Mammary epithelial cell (primary cell): ENCODE measurements at regions of chr3 and their contacts with region 1.

Region 1: GRCh38 chr3:142916615-142917014 is 27.7 kb upstream of the PCOLCE2 start:
- DNase-seq: peak; percentile 28
- H3K4me3 ChIP-seq: no peak overlapping the region
- H3K27ac ChIP-seq: no peak overlapping the region
- H3K4me1 ChIP-seq: no peaks in the 10 kb centered on the region
- H3K27me3 ChIP-seq: no peaks in the 10 kb centered on the region
- CTCF ChIP-seq: no peak

Region 2: GRCh38 chr3:142716102-142716501 is 200.5 kb before region 1 on chr3:
- CTCF ChIA-PET with region 1: no interaction called
- dilution Hi-C with region 1: no loop called
- in situ Hi-C with region 1: no loop called
- intact Hi-C with region 1: no loop called
- DNase-seq: no peak
- H3K4me3 ChIP-seq: no peak overlapping the region
- H3K27ac ChIP-seq: no peak overlapping the region
- H3K4me1 ChIP-seq: no peaks in the 10 kb centered on the region
- H3K27me3 ChIP-seq: no peaks in the 10 kb centered on the region
- CTCF ChIP-seq: no peak

Region 3: DNA sequence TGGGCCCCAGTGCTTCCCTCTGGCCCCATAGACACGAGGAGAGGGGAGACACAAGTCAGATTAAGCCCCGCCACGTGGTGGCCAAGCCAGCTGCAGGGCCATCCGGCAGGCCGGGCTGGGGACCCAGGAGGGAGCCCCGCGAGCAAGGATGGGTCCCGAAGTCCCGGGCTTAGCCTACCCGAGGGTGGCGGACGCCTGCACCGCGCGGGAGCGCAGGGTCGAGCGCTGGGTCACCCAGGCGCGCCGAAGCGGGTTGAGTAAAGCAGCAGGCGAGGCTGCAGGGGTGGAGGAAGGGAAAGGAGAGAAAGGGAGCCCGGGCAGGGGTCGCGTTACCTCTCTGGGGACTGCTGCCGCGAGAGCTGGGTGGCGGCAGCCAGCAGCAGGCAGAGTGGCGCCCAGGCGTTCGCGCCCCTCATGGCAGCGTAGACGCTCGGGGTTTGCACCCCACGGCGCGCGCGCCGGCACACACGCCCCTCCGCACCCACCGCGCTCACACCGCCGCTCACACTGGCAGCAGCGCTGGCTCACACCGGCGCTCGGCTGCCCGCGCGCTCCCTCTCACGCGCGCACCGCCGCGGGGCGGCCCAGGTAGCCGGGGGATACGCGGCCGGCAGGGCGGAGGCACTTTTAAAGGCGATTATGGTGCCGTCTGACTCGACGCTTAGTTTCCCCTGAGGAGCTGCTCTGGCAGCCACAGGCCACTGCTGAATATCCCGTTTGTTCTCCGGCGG is 28.0 kb before region 1 on chr3 and contains the start of gene PCOLCE2:
- CTCF ChIA-PET with region 1: no interaction called
- dilution Hi-C with region 1: loop called (anchors 5 kb)
- in situ Hi-C with region 1: no loop called
- intact Hi-C with region 1: no loop called
- DNase-seq: peak; percentile 47
- H3K4me3 ChIP-seq: peak within 1 kb of the TSS; percentile 60 to 61 (median 60)
- H3K27ac ChIP-seq: no peak within 1 kb of the TSS
- H3K4me1 ChIP-seq: peaks cover 13% of the 10 kb centered on the region
- H3K27me3 ChIP-seq: no peaks in the 10 kb centered on the region
- CTCF ChIP-seq: no peak
- total RNA-seq, gene PCOLCE2: 2.8 to 3.5 TPM

Region 4: GRCh38 chr3:142976621-142977398 is 60.2 kb after region 1 on chr3:
- CTCF ChIA-PET with region 1: no interaction called
- dilution Hi-C with region 1: loop called (anchors 5 kb)
- in situ Hi-C with region 1: no loop called
- intact Hi-C with region 1: no loop called
- DNase-seq: peak; percentile 89
- H3K4me3 ChIP-seq: no peak overlapping the region
- H3K27ac ChIP-seq: peak overlapping the region; percentile 1
- H3K4me1 ChIP-seq: peaks cover 14% of the 10 kb centered on the region
- H3K27me3 ChIP-seq: no peaks in the 10 kb centered on the region
- CTCF ChIP-seq: no peak

Region 5: GRCh38 chr3:143037867-143038266 is 121.3 kb after region 1 on chr3:
- CTCF ChIA-PET with region 1: no interaction called
- dilution Hi-C with region 1: no loop called
- in situ Hi-C with region 1: no loop called
- intact Hi-C with region 1: no loop called
- DNase-seq: no peak
- H3K4me3 ChIP-seq: no peak overlapping the region
- H3K27ac ChIP-seq: no peak overlapping the region
- H3K4me1 ChIP-seq: no peaks in the 10 kb centered on the region
- H3K27me3 ChIP-seq: no peaks in the 10 kb centered on the region
- CTCF ChIP-seq: peak; percentile 2 to 7